ENCODE measurements at regions of chr5 and their contacts with region 1.

Region 1: GRCh38 chr5:37034955-37035354 is 158.4 kb downstream of the NIPBL start:
- DNase-seq: no peak
- H3K4me3 ChIP-seq: no peak overlapping the region
- H3K27ac ChIP-seq: no peak overlapping the region
- H3K4me1 ChIP-seq: no peaks in the 10 kb centered on the region
- H3K27me3 ChIP-seq: no peaks in the 10 kb centered on the region
- CTCF ChIP-seq: no peak
- POLR2A ChIP-seq: no peak

Region 2: DNA sequence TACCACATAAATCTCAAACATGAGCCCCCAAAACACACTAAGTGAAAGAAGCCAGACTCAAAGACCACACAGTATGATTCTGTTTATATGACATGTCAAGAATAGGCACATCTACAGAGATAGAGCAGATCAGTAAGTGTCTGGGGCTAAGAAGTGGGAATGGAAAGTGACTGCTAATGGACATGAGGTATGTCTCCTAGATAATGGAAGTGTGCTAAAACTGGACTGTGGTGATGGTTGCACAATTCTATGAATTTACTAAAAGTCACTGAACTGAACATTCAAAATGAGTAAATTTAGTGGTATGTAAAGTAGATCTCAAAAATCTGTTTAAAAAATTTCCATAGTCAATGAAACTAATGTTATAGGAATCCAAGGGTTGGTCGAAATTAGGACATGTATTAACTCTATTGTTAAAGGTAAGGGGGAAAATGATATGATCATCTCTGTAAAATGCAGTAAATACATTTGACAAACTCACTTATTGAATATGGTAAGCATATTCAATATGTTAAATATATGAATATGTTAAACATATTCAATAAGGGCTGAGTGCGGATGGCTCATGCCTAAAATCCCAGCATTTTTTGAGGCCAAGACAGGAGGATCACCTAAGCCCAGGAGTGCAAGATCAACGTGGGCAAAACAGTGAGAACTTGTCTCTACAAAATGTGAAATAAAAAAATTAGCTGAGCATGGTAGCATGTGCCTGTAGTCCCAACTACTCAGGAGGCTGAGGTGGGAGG is 284.3 kb after region 1 on chr5:
- intact Hi-C with region 1: loop called (anchors 10 kb)
- DNase-seq: no peak
- H3K4me3 ChIP-seq: no peak overlapping the region
- H3K27ac ChIP-seq: no peak overlapping the region
- H3K4me1 ChIP-seq: peaks cover 0 to 19% (median 10%) of the 10 kb centered on the region in 6 donors
- H3K27me3 ChIP-seq: no peaks in the 10 kb centered on the region
- CTCF ChIP-seq: no peak
- POLR2A ChIP-seq: no peak

Region 3: GRCh38 chr5:37355166-37355565 is 320.2 kb after region 1 on chr5:
- intact Hi-C with region 1: no loop called
- DNase-seq: peak; percentile 17
- H3K4me3 ChIP-seq: no peak overlapping the region
- H3K27ac ChIP-seq: no peak overlapping the region
- H3K4me1 ChIP-seq: no peaks in the 10 kb centered on the region
- H3K27me3 ChIP-seq: no peaks in the 10 kb centered on the region
- CTCF ChIP-seq: no peak
- POLR2A ChIP-seq: no peak